ENCODE measurements at regions of chr7 and their contacts with region 1.

Region 1: DNA sequence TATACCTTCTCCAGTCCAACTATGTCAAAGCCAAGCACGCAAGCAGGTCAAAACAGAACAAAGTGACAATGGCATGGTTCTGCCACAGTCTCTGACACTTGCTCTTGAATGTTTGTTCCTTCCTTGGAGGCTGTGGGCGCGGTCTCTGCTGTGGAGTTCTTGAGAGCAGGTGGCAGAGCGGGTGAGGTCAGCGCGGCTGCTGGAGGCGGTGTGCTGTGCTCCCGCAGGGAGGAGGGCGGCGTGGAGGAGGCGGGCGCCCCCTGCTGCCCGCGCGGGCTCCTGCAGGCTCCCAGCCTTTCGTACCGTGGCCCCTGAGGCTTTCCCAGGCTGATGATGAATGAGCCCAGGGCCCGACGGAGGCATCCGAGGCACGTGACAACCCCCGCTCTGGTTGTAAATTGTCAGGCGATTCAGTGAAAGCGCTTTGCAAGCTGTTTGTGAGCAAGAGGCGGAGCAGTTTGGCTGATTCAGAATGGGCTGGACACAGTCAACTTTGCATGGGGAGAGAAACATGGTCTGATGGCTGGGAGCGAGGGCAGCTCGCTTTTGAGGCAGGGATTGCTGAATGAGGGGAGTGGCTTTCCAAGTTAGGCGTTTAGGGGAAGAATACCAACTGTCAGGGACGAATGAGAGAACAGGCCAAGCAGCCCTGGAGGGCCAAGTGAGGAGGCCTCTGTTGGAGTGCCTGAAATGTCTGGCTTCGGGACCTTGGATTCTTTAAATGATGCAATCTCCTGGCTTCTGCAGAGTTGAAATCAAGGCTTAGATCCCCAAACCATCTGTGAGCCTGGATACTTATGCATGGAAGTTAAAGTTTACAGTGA is 46.6 kb downstream of the CDHR3 start:
- DNase-seq: peak; percentile 61 to 89 (median 87)
- ATAC-seq: peak; percentile 98
- H3K4me3 ChIP-seq: no peak overlapping the region
- H3K4me3 Mint-ChIP-seq: peak overlapping the region; percentile 16
- H3K27ac ChIP-seq: no peak overlapping the region
- H3K27ac Mint-ChIP-seq: peak overlapping the region; percentile 18
- H3K4me1 ChIP-seq: peaks cover 32% of the 10 kb centered on the region
- H3K4me1 Mint-ChIP-seq: peaks cover 36% of the 10 kb centered on the region
- H3K27me3 ChIP-seq: no peaks in the 10 kb centered on the region
- H3K27me3 Mint-ChIP-seq: no peaks in the 10 kb centered on the region
- CTCF ChIP-seq: peak; percentile 91

Region 2: GRCh38 chr7:105990726-105991453 is 18.7 kb before region 1 on chr7:
- CTCF ChIA-PET with region 1: interaction called, 11 read pairs
- POLR2A ChIA-PET with region 1: no interaction called
- intact Hi-C with region 1: no loop called
- DNase-seq: no peak
- ATAC-seq: no peak
- H3K4me3 ChIP-seq: no peak overlapping the region
- H3K4me3 Mint-ChIP-seq: no peak overlapping the region
- H3K27ac ChIP-seq: no peak overlapping the region
- H3K27ac Mint-ChIP-seq: no peak overlapping the region
- H3K4me1 ChIP-seq: peaks cover 20% of the 10 kb centered on the region
- H3K4me1 Mint-ChIP-seq: peaks cover 22% of the 10 kb centered on the region
- H3K27me3 ChIP-seq: peaks cover 0 to 4% of the 10 kb centered on the region in 2 experiments
- H3K27me3 Mint-ChIP-seq: peaks cover 4% of the 10 kb centered on the region
- CTCF ChIP-seq: no peak

Measured in CD8-positive, alpha-beta T cell (primary cell).